ENCODE measurements at regions of chr1 and their contacts with region 1.

Region 1: GRCh38 chr1:62746085-62746808 is 37.7 kb upstream of the ATG4C start:
- DNase-seq: no peak
- ATAC-seq: no peak
- H3K4me3 Mint-ChIP-seq: no peak overlapping the region
- H3K27ac Mint-ChIP-seq: no peak overlapping the region
- H3K4me1 Mint-ChIP-seq: no peaks in the 10 kb centered on the region
- H3K27me3 Mint-ChIP-seq: no peaks in the 10 kb centered on the region
- CTCF ChIP-seq: peak; percentile 49

Region 2: DNA sequence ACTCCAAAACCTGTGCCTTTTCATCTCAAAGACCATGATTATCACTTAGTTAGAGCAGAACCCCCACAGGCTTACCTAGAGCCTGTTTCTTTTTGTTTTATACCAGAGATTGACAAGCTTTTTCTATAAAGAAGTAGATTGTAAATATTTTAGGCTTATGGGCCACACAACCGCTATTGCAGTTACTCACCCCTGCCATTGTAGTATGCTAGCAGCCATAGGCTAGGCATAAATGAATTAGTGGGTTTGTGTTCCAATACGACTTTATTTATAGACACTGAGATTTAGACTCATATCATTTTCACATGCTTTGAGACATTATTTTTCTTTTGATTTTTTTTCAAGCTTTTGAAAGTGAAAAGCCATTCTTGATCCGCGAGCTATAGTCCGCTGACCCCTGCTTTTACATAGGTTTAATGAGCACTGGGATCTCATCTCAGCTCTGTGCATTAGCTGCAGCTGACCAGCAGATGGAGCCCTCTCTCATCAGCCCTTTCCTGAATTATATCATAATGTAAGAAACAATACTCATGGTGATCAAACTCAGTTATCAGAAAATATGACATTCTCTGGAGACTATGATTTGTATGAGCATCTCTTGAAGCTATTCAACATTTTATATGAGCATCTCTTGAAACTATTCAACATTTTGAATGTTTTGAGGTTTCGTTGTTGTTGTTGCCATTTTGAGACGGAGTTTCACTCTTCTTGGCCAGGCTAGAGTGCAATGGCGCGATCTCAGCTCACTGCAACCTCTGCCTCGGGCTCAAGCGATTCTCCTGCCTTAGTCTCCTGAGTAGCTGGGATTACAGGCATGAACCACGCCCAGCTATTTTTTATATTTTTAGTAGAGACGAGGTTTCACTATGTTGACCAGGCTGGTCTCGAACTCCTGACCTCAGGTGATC is 663.5 kb before region 1 on chr1:
- CTCF ChIA-PET with region 1: interaction called, 22 read pairs
- POLR2A ChIA-PET with region 1: no interaction called
- intact Hi-C with region 1: loop called (anchors 1 kb)
- DNase-seq: no peak
- ATAC-seq: no peak
- H3K4me3 Mint-ChIP-seq: no peak overlapping the region
- H3K27ac Mint-ChIP-seq: no peak overlapping the region
- H3K4me1 Mint-ChIP-seq: no peaks in the 10 kb centered on the region
- H3K27me3 Mint-ChIP-seq: no peaks in the 10 kb centered on the region
- CTCF ChIP-seq: peak; percentile 83

Region 3: GRCh38 chr1:62175568-62176179 is 570.6 kb before region 1 on chr1:
- CTCF ChIA-PET with region 1: interaction called, 33 read pairs
- POLR2A ChIA-PET with region 1: no interaction called
- intact Hi-C with region 1: loop called (anchors 1 kb)
- DNase-seq: no peak
- ATAC-seq: no peak
- H3K4me3 Mint-ChIP-seq: no peak overlapping the region
- H3K27ac Mint-ChIP-seq: no peak overlapping the region
- H3K4me1 Mint-ChIP-seq: no peaks in the 10 kb centered on the region
- H3K27me3 Mint-ChIP-seq: peaks cover 5% of the 10 kb centered on the region
- CTCF ChIP-seq: no peak

Region 4: GRCh38 chr1:62391369-62391971 is 354.8 kb before region 1 on chr1:
- CTCF ChIA-PET with region 1: interaction called, 6 read pairs
- POLR2A ChIA-PET with region 1: no interaction called
- intact Hi-C with region 1: loop called (anchors 1 kb)
- DNase-seq: no peak
- ATAC-seq: no peak
- H3K4me3 Mint-ChIP-seq: no peak overlapping the region
- H3K27ac Mint-ChIP-seq: no peak overlapping the region
- H3K4me1 Mint-ChIP-seq: no peaks in the 10 kb centered on the region
- H3K27me3 Mint-ChIP-seq: peaks cover 14% of the 10 kb centered on the region
- CTCF ChIP-seq: no peak

Region 5: GRCh38 chr1:62407405-62408009 is 338.7 kb before region 1 on chr1:
- CTCF ChIA-PET with region 1: interaction called, 3 read pairs
- POLR2A ChIA-PET with region 1: no interaction called
- intact Hi-C with region 1: loop called (anchors 1 kb)
- DNase-seq: no peak
- ATAC-seq: no peak
- H3K4me3 Mint-ChIP-seq: no peak overlapping the region
- H3K27ac Mint-ChIP-seq: no peak overlapping the region
- H3K4me1 Mint-ChIP-seq: no peaks in the 10 kb centered on the region
- H3K27me3 Mint-ChIP-seq: no peaks in the 10 kb centered on the region
- CTCF ChIP-seq: peak; percentile 64

Region 6: DNA sequence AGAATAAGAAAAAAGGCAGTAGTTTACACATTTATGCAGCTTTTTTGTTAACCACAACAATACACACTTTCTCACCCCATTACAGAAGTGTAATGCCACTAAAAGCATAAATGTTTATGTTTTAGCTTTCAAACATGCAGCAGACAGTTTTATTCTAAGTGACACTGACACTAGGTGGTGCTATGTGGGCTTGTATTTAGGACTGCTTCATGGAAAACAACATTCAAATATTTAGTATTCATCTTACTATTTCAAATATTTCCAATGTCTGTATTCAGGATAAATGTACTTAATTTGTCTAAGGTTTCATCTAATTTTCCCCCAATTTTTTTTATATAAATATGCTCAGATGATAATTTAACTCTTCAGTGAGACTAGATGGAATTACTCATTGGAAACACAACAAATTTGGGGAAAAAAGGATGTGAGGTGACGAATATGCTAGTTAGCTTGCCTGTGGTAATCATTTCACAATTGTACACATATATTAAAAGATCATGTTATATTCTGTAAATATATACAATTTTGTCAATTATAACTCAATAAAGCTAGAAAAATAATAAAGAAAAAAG is 238.0 kb before region 1 on chr1:
- CTCF ChIA-PET with region 1: interaction called, 95 read pairs
- POLR2A ChIA-PET with region 1: no interaction called
- intact Hi-C with region 1: loop called (anchors 1 kb)
- DNase-seq: no peak
- ATAC-seq: no peak
- H3K4me3 Mint-ChIP-seq: no peak overlapping the region
- H3K27ac Mint-ChIP-seq: no peak overlapping the region
- H3K4me1 Mint-ChIP-seq: no peaks in the 10 kb centered on the region
- H3K27me3 Mint-ChIP-seq: no peaks in the 10 kb centered on the region
- CTCF ChIP-seq: peak; percentile 59

Region 7: GRCh38 chr1:62530516-62531154 is 215.6 kb before region 1 on chr1:
- CTCF ChIA-PET with region 1: interaction called, 12 read pairs
- POLR2A ChIA-PET with region 1: no interaction called
- intact Hi-C with region 1: loop called (anchors 1 kb)
- DNase-seq: no peak
- ATAC-seq: no peak
- H3K4me3 Mint-ChIP-seq: no peak overlapping the region
- H3K27ac Mint-ChIP-seq: no peak overlapping the region
- H3K4me1 Mint-ChIP-seq: no peaks in the 10 kb centered on the region
- H3K27me3 Mint-ChIP-seq: no peaks in the 10 kb centered on the region
- CTCF ChIP-seq: no peak

Measured in activated B cell treated with CpG ODN at 0.5 μM for 24 hours (primary cell).